Left ventricle myocardium inferior (tissue), 1 donor: ENCODE measurements at regions of chr4 and their contacts with region 1.

Region 1: DNA sequence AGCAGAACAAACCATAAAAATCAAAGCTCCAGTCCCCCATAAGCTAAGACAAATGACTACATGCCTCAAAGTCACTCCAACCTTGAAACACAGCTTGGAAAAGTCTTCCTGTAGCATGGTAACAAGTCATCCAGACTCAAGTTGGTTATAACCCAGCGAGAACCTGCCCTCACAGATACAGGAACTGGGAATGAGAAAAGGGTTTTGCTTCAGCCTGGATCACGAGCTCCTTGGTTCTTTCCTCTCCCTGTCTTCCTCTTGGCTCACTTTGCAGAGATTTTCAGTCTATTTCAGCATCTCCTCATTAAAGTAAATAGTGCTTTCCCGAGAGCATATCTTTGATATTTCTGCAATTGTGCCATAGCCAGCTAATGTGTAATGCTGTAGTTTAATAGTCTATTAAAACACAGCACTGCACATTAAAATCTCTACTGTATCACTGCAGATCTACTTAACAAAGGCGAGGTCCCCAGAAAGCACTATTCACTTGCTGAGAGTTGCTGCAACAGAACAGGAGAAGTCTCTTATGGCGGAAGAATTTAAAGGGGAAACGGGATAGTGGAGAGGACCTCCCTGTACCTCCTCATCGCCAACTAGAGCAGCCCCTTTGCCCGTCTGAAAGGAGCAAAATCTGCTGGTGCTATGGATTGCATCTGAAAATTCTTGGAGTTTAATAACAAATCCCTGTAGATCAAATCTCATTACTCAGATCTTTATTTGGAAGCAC is 249.3 kb upstream of the GATB start:
- DNase-seq: no peak
- H3K4me3 ChIP-seq: no peak overlapping the region
- H3K27ac ChIP-seq: no peak overlapping the region
- H3K4me1 ChIP-seq: peaks cover 12% of the 10 kb centered on the region
- H3K27me3 ChIP-seq: no peaks in the 10 kb centered on the region
- CTCF ChIP-seq: no peak

Region 2: GRCh38 chr4:152138451-152138850 is 128.3 kb after region 1 on chr4:
- intact Hi-C with region 1: no loop called
- DNase-seq: no peak
- H3K4me3 ChIP-seq: no peak overlapping the region
- H3K27ac ChIP-seq: no peak overlapping the region
- H3K4me1 ChIP-seq: no peaks in the 10 kb centered on the region
- H3K27me3 ChIP-seq: no peaks in the 10 kb centered on the region
- CTCF ChIP-seq: no peak

Region 3: GRCh38 chr4:153799694-153800074 is 1789.5 kb after region 1 on chr4:
- intact Hi-C with region 1: loop called (anchors 5 kb)
- DNase-seq: no peak
- H3K4me3 ChIP-seq: no peak overlapping the region
- H3K27ac ChIP-seq: no peak overlapping the region
- H3K4me1 ChIP-seq: no peaks in the 10 kb centered on the region
- H3K27me3 ChIP-seq: peaks cover 31% of the 10 kb centered on the region
- CTCF ChIP-seq: no peak